Sigmoid colon (tissue), 7 donors: ENCODE measurements at regions of chr9 and their contacts with region 1.

Region 1: DNA sequence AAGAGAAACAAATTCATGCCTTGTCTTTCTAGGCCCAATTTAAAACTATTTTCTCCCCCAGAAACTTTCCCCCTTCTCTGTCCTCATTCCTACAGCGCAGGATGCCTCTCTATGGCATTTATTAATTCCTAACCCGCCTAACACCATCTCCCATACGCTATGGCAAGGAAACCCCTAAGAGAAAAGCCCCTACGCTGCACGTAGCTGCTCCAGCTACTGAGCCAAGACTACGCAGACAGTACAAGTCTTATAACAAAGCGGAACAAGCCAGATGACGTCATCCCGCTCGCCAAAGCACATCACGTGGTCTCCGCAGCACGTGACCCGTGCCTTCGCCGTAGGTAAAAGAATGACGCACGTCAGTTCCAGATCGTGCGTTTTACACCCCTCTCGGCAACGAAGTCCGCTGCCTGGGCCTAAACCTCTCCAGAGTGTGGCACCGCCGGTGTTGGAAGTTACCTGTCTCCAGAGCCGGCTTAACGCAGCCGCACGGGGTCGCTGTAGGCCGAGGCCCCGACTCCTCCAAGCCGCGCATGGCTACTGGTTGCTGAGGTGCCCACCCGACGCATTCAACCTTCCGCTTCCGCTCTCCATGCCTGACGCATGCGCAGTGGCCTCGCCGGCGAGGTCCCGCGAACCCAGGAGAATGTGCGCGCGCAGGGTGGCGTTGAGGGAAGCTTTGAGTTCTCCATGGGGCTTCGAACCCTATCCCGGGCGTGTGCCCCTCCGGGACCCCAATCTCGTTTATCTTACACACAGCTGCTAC is at the start of gene TRMO:
- DNase-seq: peak; percentile 99
- H3K4me3 ChIP-seq: peak within 1 kb of the TSS; percentile 58 to 69 (median 63)
- H3K27ac ChIP-seq: peak within 1 kb of the TSS; percentile 95 to 98 (median 96)
- H3K4me1 ChIP-seq: peaks cover 0 to 17% (median 15%) of the 10 kb centered on the region in 4 donors
- H3K27me3 ChIP-seq: no peaks in the 10 kb centered on the region
- CTCF ChIP-seq: peak in 3 of 4 experiments; percentile 6 to 61 (median 50)
- EP300 ChIP-seq: peak in 3 of 4 donors; percentile 37 to 90 (median 84)
- POLR2A ChIP-seq: peak; percentile 85 to 89
- total RNA-seq, gene TRMO: 24.8 to 27.8 (median 25.7) TPM

Region 2: GRCh38 chr9:97632985-97633858 is 288.9 kb before region 1 on chr9 and contains the starts of genes NCBP1 and TSTD2:
- intact Hi-C with region 1: loop called (anchors 2 kb)
- DNase-seq: peak; percentile 99
- H3K4me3 ChIP-seq: peak within 1 kb of the TSS; percentile 73 to 91 (median 79)
- H3K27ac ChIP-seq: peak within 1 kb of the TSS; percentile 85 to 98 (median 94)
- H3K4me1 ChIP-seq: peaks cover 0 to 66% (median 43%) of the 10 kb centered on the region in 4 donors
- H3K27me3 ChIP-seq: no peaks in the 10 kb centered on the region
- CTCF ChIP-seq: no peak
- EP300 ChIP-seq: peak in 1 of 4 donors; percentile 30
- POLR2A ChIP-seq: peak; percentile 79 to 80
- total RNA-seq, gene NCBP1: 13.9 to 20.2 (median 18.7) TPM
- total RNA-seq, gene TSTD2: 15.5 to 31.2 (median 24.9) TPM

Region 3: DNA sequence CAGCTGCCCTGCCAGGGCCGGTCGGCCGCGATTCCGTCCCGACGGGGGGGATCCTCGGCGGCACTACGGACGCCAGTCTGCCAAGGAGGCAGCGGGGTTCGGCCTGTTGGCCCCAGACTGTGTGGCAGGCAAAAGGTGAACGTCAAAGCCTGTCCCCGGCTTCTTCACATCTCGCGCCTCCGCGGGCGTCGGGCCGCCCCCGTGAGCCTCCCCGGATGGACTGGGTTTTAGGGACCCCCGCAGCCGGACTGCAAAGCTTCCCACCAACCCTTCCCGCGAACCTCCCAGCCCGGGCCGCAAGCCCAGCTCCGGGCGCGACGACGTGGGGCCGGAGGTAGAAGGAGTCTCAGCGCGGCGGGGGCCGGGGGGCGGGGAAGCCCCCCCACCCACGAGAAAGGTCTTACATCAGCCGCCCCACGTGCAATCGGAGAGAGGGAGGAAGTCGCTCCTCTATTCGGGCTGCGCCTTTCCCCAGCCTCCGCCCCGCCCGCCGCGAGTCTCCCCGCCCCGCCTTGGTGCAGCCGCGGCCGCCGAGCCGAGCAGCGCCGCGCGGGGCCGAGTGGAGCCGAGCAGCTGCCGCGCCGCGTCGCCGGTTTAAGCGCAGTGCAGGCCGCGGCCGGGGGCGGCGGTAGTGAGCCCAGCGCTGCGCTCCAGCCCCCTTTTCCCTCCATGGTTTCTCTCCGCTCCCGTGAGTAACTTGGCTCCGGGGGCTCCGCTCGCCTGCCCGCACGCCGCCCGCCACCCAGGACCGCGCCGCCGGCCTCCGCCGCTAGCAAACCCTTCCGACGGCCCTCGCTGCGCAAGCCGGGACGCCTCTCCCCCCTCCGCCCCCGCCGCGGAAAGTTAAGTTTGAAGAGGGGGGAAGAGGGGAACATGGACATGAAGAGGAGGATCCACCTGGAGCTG is 60.8 kb after region 1 on chr9 and contains the start of gene ANP32B:
- intact Hi-C with region 1: loop called (anchors 1 kb)
- DNase-seq: peak; percentile 96
- H3K4me3 ChIP-seq: peak within 1 kb of the TSS; percentile 76 to 97 (median 93)
- H3K27ac ChIP-seq: peak within 1 kb of the TSS; percentile 98 to 100 (median 98)
- H3K4me1 ChIP-seq: peaks cover 0 to 45% (median 34%) of the 10 kb centered on the region in 4 donors
- H3K27me3 ChIP-seq: no peaks in the 10 kb centered on the region
- CTCF ChIP-seq: peak; percentile 33 to 92 (median 44)
- EP300 ChIP-seq: no peak
- POLR2A ChIP-seq: no peak
- total RNA-seq, gene ANP32B: 31.4 to 66.7 (median 51.3) TPM

Region 4: GRCh38 chr9:98034593-98035546 is 112.7 kb after region 1 on chr9:
- intact Hi-C with region 1: loop called (anchors 1 kb)
- DNase-seq: peak; percentile 93
- H3K4me3 ChIP-seq: peak overlapping the region in 2 of 4 donors; percentile 14 to 23
- H3K27ac ChIP-seq: no peak overlapping the region
- H3K4me1 ChIP-seq: peaks cover 0 to 6% (median 5%) of the 10 kb centered on the region in 4 donors
- H3K27me3 ChIP-seq: no peaks in the 10 kb centered on the region
- CTCF ChIP-seq: peak; percentile 33 to 94 (median 86)
- EP300 ChIP-seq: no peak
- POLR2A ChIP-seq: no peak

Region 5: DNA sequence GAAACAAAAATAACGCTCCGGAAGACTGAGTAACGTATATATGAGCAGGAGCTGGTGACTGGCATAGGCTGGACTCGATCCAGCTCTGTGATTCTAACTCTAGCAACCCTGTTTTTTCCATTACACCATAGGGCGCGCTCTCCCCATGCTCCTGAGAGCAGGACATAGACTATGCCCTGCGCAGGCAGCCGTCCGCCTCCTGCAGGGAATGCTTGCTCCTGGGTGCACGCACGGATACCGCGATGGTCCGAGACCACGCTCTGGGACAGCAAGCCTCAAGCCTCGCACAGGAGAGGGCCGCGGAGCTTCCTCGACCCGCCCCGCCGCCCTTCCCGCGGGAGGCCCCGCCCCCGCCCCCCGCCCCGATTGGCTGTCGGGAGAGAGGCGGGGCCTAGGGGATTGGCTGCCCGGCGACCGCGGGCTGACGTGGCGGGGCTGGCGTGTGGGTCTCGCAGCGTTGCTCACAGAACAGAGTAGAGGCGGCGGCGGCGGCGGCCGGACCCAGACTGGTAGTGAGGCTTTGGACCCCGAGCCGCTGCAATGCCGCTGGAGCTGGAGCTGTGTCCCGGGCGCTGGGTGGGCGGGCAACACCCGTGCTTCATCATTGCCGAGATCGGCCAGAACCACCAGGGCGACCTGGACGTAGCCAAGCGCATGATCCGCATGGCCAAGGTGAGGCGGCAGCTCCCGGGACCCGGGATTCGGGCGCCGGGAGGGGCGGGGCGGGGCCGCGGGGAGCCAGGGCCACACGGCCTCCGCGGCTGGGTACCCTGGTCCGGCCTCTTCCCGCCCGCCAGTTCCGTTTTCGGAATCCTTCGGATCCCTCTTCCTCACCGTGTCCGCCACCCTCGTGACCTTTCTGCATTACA is 134.4 kb after region 1 on chr9 and contains the start of gene NANS:
- intact Hi-C with region 1: loop called (anchors 2 kb)
- DNase-seq: peak; percentile 97
- H3K4me3 ChIP-seq: peak within 1 kb of the TSS; percentile 78 to 95 (median 82)
- H3K27ac ChIP-seq: peak within 1 kb of the TSS; percentile 95 to 98 (median 96)
- H3K4me1 ChIP-seq: peaks cover 0 to 20% (median 9%) of the 10 kb centered on the region in 4 donors
- H3K27me3 ChIP-seq: no peaks in the 10 kb centered on the region
- CTCF ChIP-seq: no peak
- EP300 ChIP-seq: no peak
- POLR2A ChIP-seq: peak; percentile 73 to 92
- total RNA-seq, gene NANS: 24.6 to 38.1 (median 28.4) TPM

Region 6: GRCh38 chr9:98192503-98193335 is 270.6 kb after region 1 on chr9 and contains the start of gene CORO2A:
- intact Hi-C with region 1: loop called (anchors 5 kb)
- DNase-seq: peak; percentile 75
- H3K4me3 ChIP-seq: peak within 1 kb of the TSS; percentile 49 to 75 (median 64)
- H3K27ac ChIP-seq: peak within 1 kb of the TSS; percentile 54 to 78 (median 67)
- H3K4me1 ChIP-seq: peaks cover 0 to 18% (median 9%) of the 10 kb centered on the region in 4 donors
- H3K27me3 ChIP-seq: no peaks in the 10 kb centered on the region
- CTCF ChIP-seq: peak in 1 of 4 experiments; percentile 20
- EP300 ChIP-seq: no peak
- POLR2A ChIP-seq: no peak
- total RNA-seq, gene CORO2A: 1.2 to 1.8 (median 1.4) TPM

Region 7: DNA sequence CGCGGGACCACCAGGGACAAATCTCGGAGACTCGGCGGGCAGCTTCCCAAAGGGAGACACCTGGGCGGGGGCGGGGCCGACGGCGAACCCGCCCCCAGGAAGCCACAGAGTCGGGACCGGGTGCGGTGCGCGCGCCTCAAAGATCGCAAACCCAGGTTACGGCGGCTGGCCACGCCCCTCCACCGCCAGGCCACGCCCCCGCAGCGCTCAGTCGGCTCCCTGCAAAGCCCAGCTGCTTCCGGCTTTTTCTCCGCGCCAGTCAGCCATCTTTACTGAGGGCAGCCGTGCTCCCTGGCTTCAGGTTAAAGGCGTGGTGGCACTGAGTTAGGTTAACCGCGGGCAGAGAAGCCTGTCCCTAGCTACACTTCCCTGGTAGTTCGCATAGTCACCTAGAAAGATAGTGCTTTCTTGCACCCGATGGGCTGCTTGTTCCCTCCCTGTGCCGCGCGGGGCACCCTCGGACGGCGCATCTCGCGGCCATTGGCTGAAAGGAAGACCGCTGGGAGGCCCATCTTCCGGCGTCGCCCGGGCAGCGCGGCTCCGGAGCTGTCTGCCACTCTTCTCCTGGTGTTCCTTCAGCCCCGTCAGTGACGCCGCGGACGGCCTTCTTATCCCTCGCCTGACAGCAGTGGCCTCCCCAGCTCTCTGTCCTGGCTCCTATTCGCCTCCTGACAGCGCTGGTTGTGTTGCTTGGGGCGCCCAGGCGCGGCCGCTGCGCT is 333.6 kb after region 1 on chr9 and contains the start of gene TBC1D2:
- intact Hi-C with region 1: loop called (anchors 2 kb)
- DNase-seq: peak; percentile 97
- H3K4me3 ChIP-seq: peak within 1 kb of the TSS; percentile 52 to 95 (median 89)
- H3K27ac ChIP-seq: peak within 1 kb of the TSS; percentile 91 to 98 (median 95)
- H3K4me1 ChIP-seq: peaks cover 0 to 23% (median 18%) of the 10 kb centered on the region in 4 donors
- H3K27me3 ChIP-seq: no peaks in the 10 kb centered on the region
- CTCF ChIP-seq: no peak
- EP300 ChIP-seq: no peak
- POLR2A ChIP-seq: peak; percentile 40 to 51
- total RNA-seq, gene TBC1D2: 4.8 to 13.8 (median 5.3) TPM